Sigmoid colon (tissue), 7 donors: ENCODE measurements at regions of chrX and their contacts with region 1.

Region 1: DNA sequence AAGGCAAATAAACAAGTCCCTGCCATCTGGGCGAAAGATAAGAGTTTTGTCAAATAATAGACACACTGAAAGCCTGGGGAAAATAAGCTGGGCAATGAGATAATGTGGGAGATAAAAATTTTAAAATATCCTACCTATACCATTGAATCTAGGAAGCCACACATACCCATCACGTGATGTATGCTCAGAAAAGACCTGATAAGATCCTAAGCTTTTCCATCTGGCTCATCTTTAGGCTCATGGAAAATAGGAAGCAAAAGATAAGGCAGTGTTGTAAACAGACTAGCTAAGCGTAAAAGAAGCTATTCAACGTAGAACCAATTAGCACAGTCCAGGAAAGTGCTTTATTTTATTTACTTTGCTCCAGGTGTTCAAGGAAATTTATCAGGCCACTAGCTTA is 103.6 kb downstream of the FAM47A start:
- DNase-seq: no peak
- H3K4me3 ChIP-seq: no peak overlapping the region
- H3K27ac ChIP-seq: no peak overlapping the region
- H3K4me1 ChIP-seq: no peaks in the 10 kb centered on the region
- H3K27me3 ChIP-seq: no peaks in the 10 kb centered on the region
- CTCF ChIP-seq: no peak
- EP300 ChIP-seq: no peak
- POLR2A ChIP-seq: no peak

Region 2: DNA sequence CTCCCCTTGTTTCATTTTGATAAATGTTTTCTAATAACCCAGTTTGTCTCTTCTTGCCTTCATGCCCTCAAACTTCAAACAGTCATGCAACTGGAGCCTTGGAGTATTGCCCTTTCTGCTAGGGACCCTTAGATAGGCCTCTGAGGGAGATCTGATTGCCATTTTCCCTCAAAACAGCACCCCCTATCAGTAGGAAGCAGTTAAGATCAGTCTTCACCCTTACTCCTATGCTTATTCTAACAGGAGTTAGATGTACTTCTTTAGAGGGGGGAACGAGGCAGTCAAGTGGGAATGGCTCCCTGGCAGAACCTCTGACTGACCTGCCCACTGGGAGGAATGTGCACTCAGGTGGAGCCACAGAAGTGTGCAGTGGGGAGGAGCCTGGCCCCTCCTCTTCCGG is 29.5 kb after region 1 on chrX:
- intact Hi-C with region 1: loop called (anchors 5 kb)
- DNase-seq: no peak
- H3K4me3 ChIP-seq: no peak overlapping the region
- H3K27ac ChIP-seq: no peak overlapping the region
- H3K4me1 ChIP-seq: no peaks in the 10 kb centered on the region
- H3K27me3 ChIP-seq: no peaks in the 10 kb centered on the region
- CTCF ChIP-seq: no peak
- EP300 ChIP-seq: no peak
- POLR2A ChIP-seq: no peak

Region 3: DNA sequence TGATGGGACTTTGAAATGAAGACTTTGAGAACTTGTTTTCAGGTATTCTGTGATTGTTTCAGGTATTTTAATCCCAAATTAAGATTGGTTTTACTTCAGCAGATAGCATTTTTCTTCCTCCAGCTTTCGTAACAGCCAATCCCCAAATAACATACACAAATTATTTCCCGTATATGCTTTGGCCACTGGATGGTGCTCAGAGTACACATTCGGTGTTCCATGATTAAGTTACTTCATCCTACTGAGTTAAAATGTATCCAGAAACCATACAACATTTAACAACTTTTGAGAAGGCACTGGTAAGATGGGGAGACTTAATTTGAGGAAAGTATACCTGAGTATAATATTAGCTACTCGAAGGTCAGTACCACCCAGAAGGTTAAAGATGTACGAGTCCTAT is 337.0 kb after region 1 on chrX:
- intact Hi-C with region 1: no loop called
- DNase-seq: no peak
- H3K4me3 ChIP-seq: no peak overlapping the region
- H3K27ac ChIP-seq: no peak overlapping the region
- H3K4me1 ChIP-seq: no peaks in the 10 kb centered on the region
- H3K27me3 ChIP-seq: no peaks in the 10 kb centered on the region
- CTCF ChIP-seq: no peak
- EP300 ChIP-seq: no peak
- POLR2A ChIP-seq: no peak

Region 4: DNA sequence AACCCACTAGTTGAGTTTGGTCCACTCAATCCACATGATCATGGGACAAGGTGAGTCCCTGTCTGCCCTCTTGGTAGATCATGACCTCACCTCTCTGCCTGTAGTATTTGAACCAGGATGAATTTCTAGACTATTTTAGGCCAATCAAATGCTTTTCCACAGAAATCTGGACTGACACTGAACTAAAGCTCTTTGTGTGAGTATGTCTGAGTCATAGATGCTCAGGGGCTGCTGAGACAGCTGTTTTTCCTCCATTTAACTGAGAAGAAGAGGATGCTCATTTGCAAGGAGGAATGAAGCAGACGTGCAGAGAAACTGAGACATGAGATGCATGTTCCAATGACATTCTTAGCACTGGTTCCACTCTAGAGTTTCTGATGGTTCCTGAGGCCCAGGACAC is 705.9 kb after region 1 on chrX:
- intact Hi-C with region 1: no loop called
- DNase-seq: no peak
- H3K4me3 ChIP-seq: no peak overlapping the region
- H3K27ac ChIP-seq: no peak overlapping the region
- H3K4me1 ChIP-seq: no peaks in the 10 kb centered on the region
- H3K27me3 ChIP-seq: no peaks in the 10 kb centered on the region
- CTCF ChIP-seq: no peak
- EP300 ChIP-seq: no peak
- POLR2A ChIP-seq: no peak